Sigmoid colon (tissue), 7 donors: ENCODE measurements at regions of chr7 and their contacts with region 1.

Region 1: DNA sequence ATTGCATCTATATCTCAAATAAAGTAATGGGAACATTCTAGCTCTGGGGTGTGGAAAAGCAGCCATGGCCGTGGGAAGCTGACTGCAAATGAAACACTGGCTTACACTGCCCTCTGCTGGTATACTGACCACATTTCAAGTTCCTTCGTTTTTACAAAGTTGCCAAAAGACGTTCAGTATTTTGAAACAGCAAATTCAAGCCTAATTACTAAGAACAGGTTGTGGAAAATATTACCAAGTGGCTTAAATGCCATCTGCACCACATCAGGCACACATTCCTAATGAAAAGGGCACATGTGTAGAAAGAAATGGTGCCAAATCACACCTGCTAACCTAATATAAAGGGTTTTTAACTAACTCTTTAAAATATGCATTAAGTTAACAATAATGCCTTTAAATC is 83.9 kb downstream of the JAZF1 start:
- DNase-seq: peak; percentile 83
- H3K4me3 ChIP-seq: no peak overlapping the region
- H3K27ac ChIP-seq: peak overlapping the region; percentile 21 to 73 (median 54)
- H3K4me1 ChIP-seq: peaks cover 0 to 77% (median 50%) of the 10 kb centered on the region in 4 donors
- H3K27me3 ChIP-seq: no peaks in the 10 kb centered on the region
- CTCF ChIP-seq: peak; percentile 82 to 88 (median 86)
- EP300 ChIP-seq: no peak
- POLR2A ChIP-seq: no peak

Region 2: GRCh38 chr7:27739909-27740448 is 356.7 kb before region 1 on chr7 and contains the start of gene TAX1BP1:
- intact Hi-C with region 1: loop called (anchors 5 kb)
- DNase-seq: peak; percentile 98
- H3K4me3 ChIP-seq: peak within 1 kb of the TSS; percentile 68 to 93 (median 90)
- H3K27ac ChIP-seq: peak within 1 kb of the TSS; percentile 93 to 99 (median 97)
- H3K4me1 ChIP-seq: peaks cover 0 to 47% (median 31%) of the 10 kb centered on the region in 4 donors
- H3K27me3 ChIP-seq: no peaks in the 10 kb centered on the region
- CTCF ChIP-seq: no peak
- EP300 ChIP-seq: peak in 1 of 4 donors; percentile 18
- POLR2A ChIP-seq: peak; percentile 99
- total RNA-seq, gene TAX1BP1: 109 to 170 (median 138) TPM

Region 3: GRCh38 chr7:27921081-27921836 is 175.5 kb before region 1 on chr7:
- intact Hi-C with region 1: loop called (anchors 5 kb)
- DNase-seq: no peak
- H3K4me3 ChIP-seq: peak overlapping the region in 1 of 4 donors; percentile 3
- H3K27ac ChIP-seq: peak overlapping the region in 2 of 4 donors; percentile 17 to 41
- H3K4me1 ChIP-seq: peaks cover 0 to 52% (median 24%) of the 10 kb centered on the region in 4 donors
- H3K27me3 ChIP-seq: no peaks in the 10 kb centered on the region
- CTCF ChIP-seq: peak; percentile 34 to 50 (median 38)
- EP300 ChIP-seq: no peak
- POLR2A ChIP-seq: no peak

Region 4: GRCh38 chr7:28062197-28062991 is 34.3 kb before region 1 on chr7:
- intact Hi-C with region 1: loop called (anchors 2 kb)
- DNase-seq: peak; percentile 90
- H3K4me3 ChIP-seq: no peak overlapping the region
- H3K27ac ChIP-seq: peak overlapping the region in 3 of 4 donors; percentile 80 to 85 (median 81)
- H3K4me1 ChIP-seq: peaks cover 0 to 74% (median 64%) of the 10 kb centered on the region in 4 donors
- H3K27me3 ChIP-seq: no peaks in the 10 kb centered on the region
- CTCF ChIP-seq: peak in 3 of 4 experiments; percentile 44 to 68 (median 60)
- EP300 ChIP-seq: no peak
- POLR2A ChIP-seq: no peak

Region 5: GRCh38 chr7:28239823-28240204 is 143.1 kb after region 1 on chr7:
- intact Hi-C with region 1: no loop called
- DNase-seq: no peak
- H3K4me3 ChIP-seq: no peak overlapping the region
- H3K27ac ChIP-seq: no peak overlapping the region
- H3K4me1 ChIP-seq: no peaks in the 10 kb centered on the region
- H3K27me3 ChIP-seq: no peaks in the 10 kb centered on the region
- CTCF ChIP-seq: no peak
- EP300 ChIP-seq: no peak
- POLR2A ChIP-seq: no peak